ENCODE measurements at regions of chr7 and their contacts with region 1.

Region 1: GRCh38 chr7:92447345-92448204 is at the start of gene GATAD1:
- DNase-seq: peak; percentile 90
- ATAC-seq: peak; percentile 79
- H3K4me3 Mint-ChIP-seq: peak within 1 kb of the TSS; percentile 76
- H3K27ac Mint-ChIP-seq: peak within 1 kb of the TSS; percentile 93
- H3K4me1 Mint-ChIP-seq: peaks cover 7% of the 10 kb centered on the region
- H3K27me3 Mint-ChIP-seq: no peaks in the 10 kb centered on the region
- total RNA-seq, gene GATAD1: 11.4 to 12.4 TPM

Region 2: GRCh38 chr7:91880413-91881241 is 566.9 kb before region 1 on chr7 and contains the start of gene MTERF1:
- CTCF ChIA-PET with region 1: interaction called, 20 read pairs
- POLR2A ChIA-PET with region 1: interaction called, 15 read pairs
- DNase-seq: peak; percentile 95
- ATAC-seq: peak; percentile 98
- H3K4me3 Mint-ChIP-seq: peak within 1 kb of the TSS; percentile 83
- H3K27ac Mint-ChIP-seq: peak within 1 kb of the TSS; percentile 89
- H3K4me1 Mint-ChIP-seq: peaks cover 31% of the 10 kb centered on the region
- H3K27me3 Mint-ChIP-seq: no peaks in the 10 kb centered on the region
- total RNA-seq, gene MTERF1: 16.2 to 16.8 TPM

Region 3: DNA sequence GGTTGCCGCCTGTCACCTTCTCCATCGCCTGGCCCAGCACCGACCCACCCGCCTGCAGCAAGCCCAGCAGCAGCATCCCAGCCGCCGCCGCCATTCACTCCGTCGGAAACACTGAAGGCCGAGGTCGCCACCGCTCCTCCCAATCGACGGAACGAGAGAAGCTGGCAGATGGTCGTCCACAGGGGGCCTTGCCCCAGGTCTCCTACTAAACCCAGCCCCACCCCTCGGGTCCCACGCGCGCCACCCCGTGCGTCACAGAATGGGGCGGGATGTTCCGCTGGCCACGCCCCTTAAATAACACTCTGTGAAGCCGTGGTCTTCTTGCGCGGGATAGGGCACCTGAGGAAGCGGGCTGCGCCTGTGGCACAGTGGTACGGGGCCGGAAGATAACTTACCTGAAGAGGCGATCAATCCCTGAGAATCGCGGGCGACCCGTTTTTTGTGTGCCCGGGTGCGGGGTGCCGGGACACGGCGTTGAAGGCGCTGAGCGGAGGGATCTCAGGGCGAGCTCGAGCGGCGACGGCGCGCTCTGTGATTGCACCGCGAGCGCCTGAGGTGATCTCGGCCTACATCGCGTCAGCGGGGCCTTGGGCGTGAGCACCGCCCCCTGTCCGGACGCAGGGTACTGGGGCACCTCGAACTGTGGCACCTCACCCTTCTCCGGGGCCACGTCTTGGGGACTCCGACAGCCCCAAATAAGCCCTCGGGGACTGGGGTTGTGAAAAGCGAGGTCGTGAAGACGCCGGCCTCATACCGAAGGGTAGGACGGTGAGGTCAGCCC is 313.1 kb before region 1 on chr7 and contains the start of gene CYP51A1:
- CTCF ChIA-PET with region 1: interaction called, 10 read pairs
- POLR2A ChIA-PET with region 1: interaction called, 15 read pairs
- DNase-seq: peak; percentile 94
- ATAC-seq: peak; percentile 92
- H3K4me3 Mint-ChIP-seq: peak within 1 kb of the TSS; percentile 95
- H3K27ac Mint-ChIP-seq: peak within 1 kb of the TSS; percentile 100
- H3K4me1 Mint-ChIP-seq: peaks cover 34% of the 10 kb centered on the region
- H3K27me3 Mint-ChIP-seq: no peaks in the 10 kb centered on the region
- total RNA-seq, gene CYP51A1: 36.2 to 36.4 TPM

Region 4: DNA sequence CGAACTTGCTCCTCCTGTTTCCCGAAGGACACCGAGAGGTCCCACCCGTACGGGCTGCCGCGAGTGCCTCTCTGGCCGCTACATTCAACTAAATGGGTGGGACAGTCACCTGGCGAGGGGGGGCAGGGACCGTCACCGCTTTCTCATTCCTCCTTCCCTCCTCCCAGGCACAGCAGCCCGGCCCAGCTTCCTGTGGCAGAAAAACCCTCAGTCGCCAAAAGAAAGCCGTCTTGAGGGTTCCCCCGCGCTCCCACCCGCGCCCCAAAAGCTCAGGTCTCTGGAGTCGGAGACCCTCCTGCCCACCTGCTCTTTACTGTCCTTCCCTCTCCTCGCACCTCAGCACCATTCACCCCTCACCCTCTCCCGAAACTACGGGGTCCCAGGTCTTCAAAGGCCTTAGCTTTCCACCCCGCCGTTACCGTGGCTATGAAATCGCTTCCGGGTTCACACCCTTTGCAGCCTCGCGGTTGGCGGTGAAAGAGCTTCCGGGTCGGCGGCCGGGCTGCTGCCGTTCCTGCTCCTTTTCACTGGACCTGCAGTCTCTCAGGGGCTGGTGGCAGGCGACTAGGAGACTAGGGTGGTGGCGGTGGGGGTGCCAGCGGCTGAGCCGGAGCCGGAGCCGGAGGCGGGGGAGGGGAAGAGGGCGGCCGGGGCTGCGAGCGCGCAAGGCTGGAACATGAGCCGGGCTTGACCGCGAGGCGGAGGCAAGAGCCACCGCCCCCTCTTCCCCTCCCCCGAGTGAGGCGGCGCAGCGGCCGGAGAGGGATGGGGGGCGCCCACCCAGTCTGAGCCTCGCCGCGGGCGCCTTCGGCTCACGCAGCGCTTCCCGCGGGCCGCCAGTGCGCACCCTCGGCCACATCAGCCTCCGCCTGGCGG is 201.8 kb before region 1 on chr7 and contains the starts of genes ANKIB1 and KRIT1:
- CTCF ChIA-PET with region 1: interaction called, 28 read pairs
- POLR2A ChIA-PET with region 1: interaction called, 33 read pairs
- DNase-seq: peak; percentile 92
- ATAC-seq: peak; percentile 79
- H3K4me3 Mint-ChIP-seq: peak within 1 kb of the TSS; percentile 92
- H3K27ac Mint-ChIP-seq: peak within 1 kb of the TSS; percentile 97
- H3K4me1 Mint-ChIP-seq: peaks cover 37% of the 10 kb centered on the region
- H3K27me3 Mint-ChIP-seq: no peaks in the 10 kb centered on the region
- total RNA-seq, gene ANKIB1: 55.7 to 57.1 TPM
- total RNA-seq, gene KRIT1: 39.9 to 44.8 TPM

Region 5: DNA sequence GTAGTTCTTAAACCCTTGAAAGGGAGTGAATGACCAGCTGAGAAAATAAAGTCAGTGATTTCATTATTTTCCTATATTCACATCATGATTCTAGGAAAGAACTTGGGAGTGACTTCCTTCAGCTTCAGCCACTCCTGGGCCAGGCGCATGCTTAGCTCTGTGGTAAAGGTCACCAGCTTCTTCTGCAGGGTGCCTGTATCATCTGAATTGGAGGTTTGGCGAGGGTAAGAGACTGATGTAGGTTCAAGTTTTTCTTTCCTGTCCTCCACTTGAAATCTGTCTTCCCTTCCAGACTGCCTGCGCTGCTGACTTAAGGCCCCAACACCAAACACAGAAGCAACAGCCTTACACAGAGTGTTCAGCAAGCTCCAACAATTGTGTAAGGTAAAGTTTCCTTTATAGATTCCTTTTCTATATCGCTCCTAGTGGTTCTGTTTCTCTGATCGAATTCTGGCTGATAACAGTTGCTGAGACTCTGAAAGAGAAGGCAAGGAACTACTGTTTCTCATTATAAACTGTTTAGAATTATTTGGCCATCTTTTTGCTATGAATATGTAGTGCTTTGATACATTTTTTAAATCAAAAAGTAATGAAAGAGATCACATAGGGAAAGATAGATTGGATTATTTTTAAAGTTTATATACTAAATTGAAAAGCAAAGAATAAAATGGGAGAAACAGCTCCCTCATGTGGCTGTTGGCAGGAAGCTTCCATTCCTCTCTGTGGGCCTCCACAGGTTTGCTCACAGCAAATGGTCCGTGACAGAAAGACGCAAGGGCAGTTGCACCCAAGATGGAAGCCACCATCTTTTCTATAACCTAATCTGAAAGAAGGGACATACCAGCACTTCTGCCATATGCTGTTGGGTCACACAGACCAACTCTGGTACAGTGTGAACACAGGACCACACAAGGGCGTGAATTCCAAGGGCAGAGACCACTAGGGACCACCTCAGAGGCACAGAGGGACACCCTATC is 13.7 kb after region 1 on chr7:
- CTCF ChIA-PET with region 1: interaction called, 33 read pairs
- POLR2A ChIA-PET with region 1: interaction called, 3 read pairs
- DNase-seq: peak; percentile 51
- ATAC-seq: peak; percentile 76
- H3K4me3 Mint-ChIP-seq: no peak overlapping the region
- H3K27ac Mint-ChIP-seq: no peak overlapping the region
- H3K4me1 Mint-ChIP-seq: no peaks in the 10 kb centered on the region
- H3K27me3 Mint-ChIP-seq: no peaks in the 10 kb centered on the region

Region 6: GRCh38 chr7:92528188-92528957 is 80.8 kb after region 1 on chr7 and contains the starts of genes PEX1 and RBM48:
- CTCF ChIA-PET with region 1: interaction called, 11 read pairs
- POLR2A ChIA-PET with region 1: interaction called, 15 read pairs
- DNase-seq: peak; percentile 97
- ATAC-seq: peak; percentile 94
- H3K4me3 Mint-ChIP-seq: peak within 1 kb of the TSS; percentile 93
- H3K27ac Mint-ChIP-seq: peak within 1 kb of the TSS; percentile 99
- H3K4me1 Mint-ChIP-seq: peaks cover 29% of the 10 kb centered on the region
- H3K27me3 Mint-ChIP-seq: no peaks in the 10 kb centered on the region
- total RNA-seq, gene PEX1: 13.6 to 16.8 TPM
- total RNA-seq, gene RBM48: 14.5 to 15.4 TPM

Measured in activated CD8-positive, alpha-beta T cell treated with anti-CD3 and anti-CD28 coated beads, Interleukin-2, amount 10 ng/mL, durations not matched to agents 7 days and 5 days (primary cell).